Mammary epithelial cell (primary cell): ENCODE measurements at regions of chr7 and their contacts with region 1.

Region 1: DNA sequence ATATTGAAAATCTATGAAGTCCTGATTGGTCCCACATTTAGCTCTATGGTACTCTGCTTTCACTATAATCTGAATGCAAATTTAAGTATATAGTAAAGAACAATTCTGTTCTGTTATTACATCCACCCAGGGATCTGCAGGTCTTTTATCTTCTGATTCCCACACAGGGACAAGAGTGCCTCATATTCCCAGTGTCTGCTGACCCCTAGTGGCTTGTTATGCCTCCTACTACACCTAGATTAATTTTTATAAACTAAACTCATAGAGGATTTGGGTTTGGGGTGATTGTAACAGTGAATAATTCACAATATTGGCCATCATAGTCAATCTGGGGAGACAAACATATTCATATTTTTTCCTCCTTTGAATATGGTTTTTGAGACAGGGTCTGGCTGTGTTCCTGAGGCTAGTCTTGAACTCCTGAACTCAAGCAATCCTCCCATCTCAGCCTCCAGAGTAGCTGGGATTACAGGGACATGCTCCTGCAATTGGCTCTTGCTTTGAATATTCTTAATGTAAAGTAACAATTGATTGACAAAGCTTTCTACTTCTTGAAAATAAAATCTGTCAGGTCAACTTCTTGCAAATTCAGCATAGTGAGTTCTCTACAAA is 282.1 kb downstream of the KCND2 start:
- DNase-seq: peak; percentile 28
- H3K4me3 ChIP-seq: no peak overlapping the region
- H3K27ac ChIP-seq: no peak overlapping the region
- H3K4me1 ChIP-seq: no peaks in the 10 kb centered on the region
- H3K27me3 ChIP-seq: peaks cover 5% of the 10 kb centered on the region
- CTCF ChIP-seq: peak; percentile 77 to 80

Region 2: GRCh38 chr7:118918556-118918955 is 1636.5 kb before region 1 on chr7:
- CTCF ChIA-PET with region 1: no interaction called
- dilution Hi-C with region 1: no loop called
- in situ Hi-C with region 1: no loop called
- intact Hi-C with region 1: loop called (anchors 5 kb)
- DNase-seq: peak; percentile 4
- H3K4me3 ChIP-seq: no peak overlapping the region
- H3K27ac ChIP-seq: no peak overlapping the region
- H3K4me1 ChIP-seq: no peaks in the 10 kb centered on the region
- H3K27me3 ChIP-seq: peaks cover 5% of the 10 kb centered on the region
- CTCF ChIP-seq: peak; percentile 48 to 52

Region 3: GRCh38 chr7:119270045-119270464 is 1285.0 kb before region 1 on chr7:
- CTCF ChIA-PET with region 1: no interaction called
- dilution Hi-C with region 1: no loop called
- in situ Hi-C with region 1: loop called in 1 of 2 experiments (anchors 25 kb)
- intact Hi-C with region 1: loop called (anchors 5 kb)
- DNase-seq: peak; percentile 50
- H3K4me3 ChIP-seq: no peak overlapping the region
- H3K27ac ChIP-seq: no peak overlapping the region
- H3K4me1 ChIP-seq: peaks cover 6% of the 10 kb centered on the region
- H3K27me3 ChIP-seq: no peaks in the 10 kb centered on the region
- CTCF ChIP-seq: peak; percentile 91

Region 4: GRCh38 chr7:119935418-119936025 is 619.5 kb before region 1 on chr7:
- CTCF ChIA-PET with region 1: interaction called, 4 read pairs
- dilution Hi-C with region 1: no loop called
- in situ Hi-C with region 1: loop called (anchors 25 kb)
- intact Hi-C with region 1: loop called (anchors 1 kb)
- DNase-seq: peak; percentile 2
- H3K4me3 ChIP-seq: no peak overlapping the region
- H3K27ac ChIP-seq: no peak overlapping the region
- H3K4me1 ChIP-seq: no peaks in the 10 kb centered on the region
- H3K27me3 ChIP-seq: no peaks in the 10 kb centered on the region
- CTCF ChIP-seq: peak; percentile 33 to 55

Region 5: DNA sequence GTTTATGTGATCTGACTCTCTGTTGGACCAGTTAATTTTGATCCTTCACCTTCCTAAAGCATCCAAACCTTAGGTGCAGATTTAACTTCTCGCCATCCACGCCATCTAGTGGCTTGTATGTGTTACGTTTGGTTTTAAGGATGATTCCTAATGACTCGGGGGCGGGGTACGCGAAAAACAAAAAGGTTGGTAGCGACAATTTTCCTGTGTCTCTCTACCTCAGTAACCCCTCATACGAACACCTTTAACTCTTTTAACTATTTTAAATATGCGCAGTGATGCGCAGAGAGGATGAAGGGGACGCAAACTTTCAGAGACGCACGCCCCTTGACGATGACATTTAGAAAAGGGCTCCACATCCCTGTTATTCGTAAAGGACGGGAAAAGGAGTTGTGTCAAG is 282.8 kb before region 1 on chr7:
- CTCF ChIA-PET with region 1: no interaction called
- dilution Hi-C with region 1: no loop called
- in situ Hi-C with region 1: no loop called
- intact Hi-C with region 1: loop called (anchors 2 kb)
- DNase-seq: peak; percentile 29
- H3K4me3 ChIP-seq: peak overlapping the region; percentile 24 to 43 (median 38)
- H3K27ac ChIP-seq: no peak overlapping the region
- H3K4me1 ChIP-seq: peaks cover 8% of the 10 kb centered on the region
- H3K27me3 ChIP-seq: peaks cover 10% of the 10 kb centered on the region
- CTCF ChIP-seq: peak; percentile 58 to 77

Region 6: DNA sequence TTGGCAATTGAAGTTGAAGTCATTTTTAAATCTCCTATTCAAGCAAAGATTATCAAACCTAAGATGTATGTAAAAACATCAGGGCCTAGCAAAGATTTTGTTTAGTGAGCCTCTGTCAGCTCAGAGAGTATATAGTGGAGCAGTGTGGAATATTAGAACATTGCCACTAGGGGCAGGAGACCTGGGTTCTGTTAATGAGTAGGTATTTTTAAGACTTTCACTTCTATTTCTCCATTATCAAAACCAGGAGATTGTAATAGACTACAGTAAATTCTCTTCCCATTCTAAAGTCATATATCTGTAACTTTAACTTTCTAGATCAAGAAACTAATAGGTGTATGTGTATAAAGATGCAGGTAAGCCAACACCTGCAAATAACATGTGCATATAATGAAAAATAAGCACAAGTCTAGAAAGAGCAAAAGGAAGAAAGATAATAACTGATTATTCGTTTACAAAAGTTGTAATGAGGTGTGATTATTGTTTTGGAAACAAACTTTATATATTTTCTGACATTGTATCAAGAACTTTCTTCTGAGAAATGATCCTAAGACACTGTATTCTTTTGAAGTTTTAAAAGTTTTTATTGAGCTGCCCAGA is 217.7 kb before region 1 on chr7:
- CTCF ChIA-PET with region 1: no interaction called
- dilution Hi-C with region 1: no loop called
- in situ Hi-C with region 1: no loop called
- intact Hi-C with region 1: loop called (anchors 10 kb)
- DNase-seq: peak; percentile 0
- H3K4me3 ChIP-seq: no peak overlapping the region
- H3K27ac ChIP-seq: no peak overlapping the region
- H3K4me1 ChIP-seq: no peaks in the 10 kb centered on the region
- H3K27me3 ChIP-seq: no peaks in the 10 kb centered on the region
- CTCF ChIP-seq: peak; percentile 67 to 73

Region 7: GRCh38 chr7:120725376-120726039 is 170.4 kb after region 1 on chr7:
- CTCF ChIA-PET with region 1: no interaction called
- dilution Hi-C with region 1: no loop called
- in situ Hi-C with region 1: no loop called
- intact Hi-C with region 1: loop called (anchors 5 kb)
- DNase-seq: no peak
- H3K4me3 ChIP-seq: no peak overlapping the region
- H3K27ac ChIP-seq: no peak overlapping the region
- H3K4me1 ChIP-seq: no peaks in the 10 kb centered on the region
- H3K27me3 ChIP-seq: no peaks in the 10 kb centered on the region
- CTCF ChIP-seq: peak; percentile 58 to 61